ENCODE measurements at regions of chr17 and their contacts with region 1.

Region 1: GRCh38 chr17:38735161-38735997 is 5.2 kb downstream of the CISD3 start:
- DNase-seq: peak; percentile 19 to 82 (median 67)
- ATAC-seq: peak in 2 of 4 experiments; percentile 27 to 41
- H3K4me3 ChIP-seq: no peak overlapping the region
- H3K4me3 Mint-ChIP-seq: no peak overlapping the region
- H3K27ac ChIP-seq: no peak overlapping the region
- H3K27ac Mint-ChIP-seq: no peak overlapping the region
- H3K4me1 ChIP-seq: peaks cover 0 to 49% of the 10 kb centered on the region in 2 experiments
- H3K4me1 Mint-ChIP-seq: peaks cover 36 to 49% (median 45%) of the 10 kb centered on the region in 3 donors
- H3K27me3 ChIP-seq: peaks cover 0 to 19% of the 10 kb centered on the region in 2 experiments
- H3K27me3 Mint-ChIP-seq: peaks cover 0 to 3% of the 10 kb centered on the region in 2 donors

Region 2: DNA sequence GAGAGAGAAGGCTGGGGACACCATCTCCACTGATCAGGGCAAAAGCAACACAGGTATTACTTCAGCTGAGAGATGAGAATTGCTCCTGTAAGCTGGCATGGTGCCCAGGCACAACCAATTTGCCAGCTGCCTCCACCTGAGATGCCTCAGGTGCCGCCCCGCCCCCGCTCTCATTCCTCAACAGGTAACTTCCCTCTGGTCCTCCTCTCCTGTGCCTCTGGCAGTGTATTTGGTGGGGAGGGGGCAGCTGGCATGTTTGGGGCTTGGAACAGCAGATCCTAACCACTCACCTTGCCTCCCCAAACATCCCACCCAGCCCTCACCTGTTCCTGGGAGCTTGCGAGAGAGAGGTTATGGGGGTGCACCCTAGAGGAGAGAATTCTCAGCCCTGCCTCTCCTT is 126.7 kb before region 1 on chr17:
- CTCF ChIA-PET with region 1: no interaction called
- POLR2A ChIA-PET with region 1: no interaction called
- DNase-seq: no peak
- ATAC-seq: no peak
- H3K4me3 ChIP-seq: no peak overlapping the region
- H3K4me3 Mint-ChIP-seq: no peak overlapping the region
- H3K27ac ChIP-seq: no peak overlapping the region
- H3K27ac Mint-ChIP-seq: peak overlapping the region in 1 of 2 donors; percentile 63
- H3K4me1 ChIP-seq: peaks cover 3 to 25% of the 10 kb centered on the region in 2 experiments
- H3K4me1 Mint-ChIP-seq: peaks cover 11 to 15% (median 14%) of the 10 kb centered on the region in 3 donors
- H3K27me3 ChIP-seq: peaks cover 9 to 85% of the 10 kb centered on the region in 2 experiments
- H3K27me3 Mint-ChIP-seq: peaks cover 49 to 76% of the 10 kb centered on the region in 2 donors

Region 3: DNA sequence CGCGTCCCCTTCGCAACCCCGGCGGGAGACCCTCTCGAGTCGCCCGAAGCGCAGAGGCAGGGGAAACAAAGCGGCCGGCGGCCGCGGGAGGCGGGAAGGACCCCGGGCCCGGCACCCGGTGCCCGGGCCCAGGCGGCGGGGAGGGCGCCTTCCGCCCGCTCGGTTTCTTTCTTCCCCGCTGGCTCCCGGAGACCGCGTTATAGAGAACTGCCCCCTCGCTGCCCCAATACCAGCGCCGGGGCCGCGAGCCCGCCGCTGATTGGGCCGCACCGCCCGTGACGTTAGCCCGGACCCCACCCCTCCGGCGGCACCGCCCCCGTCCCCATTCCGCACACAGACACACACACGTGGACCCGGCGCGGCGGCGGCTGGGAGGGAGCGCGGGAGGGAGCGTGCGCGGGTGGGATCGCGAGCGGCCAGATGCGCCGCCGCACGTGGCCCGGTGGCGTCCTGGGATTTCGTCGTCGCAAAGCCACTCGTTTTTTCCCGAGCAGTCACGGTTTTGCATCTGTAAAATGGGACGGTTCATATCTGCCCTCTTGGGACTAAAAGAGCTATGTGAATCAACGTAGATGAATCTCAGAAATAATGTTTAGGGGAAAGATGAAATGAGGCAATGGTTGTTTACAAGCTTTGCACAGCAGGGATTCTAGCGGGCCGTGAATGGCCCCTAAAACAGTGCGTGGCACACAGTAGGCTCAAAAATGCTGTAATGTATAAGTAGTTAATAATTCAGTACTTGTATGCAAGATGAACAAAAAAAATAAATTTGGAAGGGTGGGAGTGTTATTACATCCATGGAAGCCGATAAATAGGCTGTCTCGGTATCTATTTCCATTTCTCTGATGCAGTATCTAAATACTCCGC is 60.4 kb before region 1 on chr17 and contains the start of gene EPOP:
- CTCF ChIA-PET with region 1: interaction called, 10 to 23 read pairs
- POLR2A ChIA-PET with region 1: no interaction called
- DNase-seq: peak; percentile 46 to 90 (median 66)
- ATAC-seq: peak; percentile 85 to 92 (median 88)
- H3K4me3 ChIP-seq: peak within 1 kb of the TSS; percentile 37 to 70
- H3K4me3 Mint-ChIP-seq: peak within 1 kb of the TSS; percentile 60 to 64 (median 63)
- H3K27ac ChIP-seq: no peak within 1 kb of the TSS
- H3K27ac Mint-ChIP-seq: peak within 1 kb of the TSS in 1 of 2 donors; percentile 2
- H3K4me1 ChIP-seq: peaks cover 3 to 35% of the 10 kb centered on the region in 2 experiments
- H3K4me1 Mint-ChIP-seq: peaks cover 10 to 25% (median 18%) of the 10 kb centered on the region in 3 donors
- H3K27me3 ChIP-seq: peaks cover under 1 to 52% of the 10 kb centered on the region in 2 experiments
- H3K27me3 Mint-ChIP-seq: peaks cover 15 to 29% of the 10 kb centered on the region in 2 donors
- total RNA-seq, gene EPOP: 0.68 to 1.6 (median 0.90) TPM

Region 4: GRCh38 chr17:38705803-38706504 is 29.4 kb before region 1 on chr17:
- CTCF ChIA-PET with region 1: interaction called in 1 of 2 experiments, 13 read pairs
- POLR2A ChIA-PET with region 1: interaction called in 1 of 2 experiments, 4 read pairs
- DNase-seq: peak in 5 of 35 experiments; percentile 20 to 46 (median 28)
- ATAC-seq: no peak
- H3K4me3 ChIP-seq: peak overlapping the region; percentile 85 to 89
- H3K4me3 Mint-ChIP-seq: peak overlapping the region; percentile 91 to 96 (median 96)
- H3K27ac ChIP-seq: peak overlapping the region; percentile 66
- H3K27ac Mint-ChIP-seq: peak overlapping the region; percentile 93 to 95
- H3K4me1 ChIP-seq: peaks cover 15 to 80% of the 10 kb centered on the region in 2 experiments
- H3K4me1 Mint-ChIP-seq: peaks cover 63 to 76% (median 64%) of the 10 kb centered on the region in 3 donors
- H3K27me3 ChIP-seq: no peaks in the 10 kb centered on the region
- H3K27me3 Mint-ChIP-seq: no peaks in the 10 kb centered on the region

Region 5: DNA sequence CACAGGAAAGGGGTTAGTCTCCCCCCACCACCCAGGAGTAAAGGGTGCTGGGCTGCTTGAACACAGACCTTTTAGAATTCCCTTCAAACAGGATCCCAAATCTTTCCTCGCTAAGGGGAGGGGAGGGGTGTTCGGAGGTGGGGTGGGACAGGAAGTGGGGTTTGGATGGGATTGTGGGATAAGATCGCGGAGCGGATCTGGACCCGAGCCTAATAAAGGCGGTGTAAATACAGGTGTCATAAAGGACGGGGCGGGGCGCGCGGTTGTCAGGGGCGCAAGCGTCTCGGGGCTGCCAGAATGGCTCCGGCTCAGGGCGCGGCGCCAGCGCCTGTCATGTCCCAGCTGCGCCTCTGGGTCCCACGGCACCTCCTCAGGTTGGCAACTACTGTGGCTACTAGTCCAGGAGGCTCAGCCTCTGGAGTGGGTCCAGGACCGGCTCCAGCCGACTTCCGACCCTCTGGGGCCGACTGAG is 291.6 kb after region 1 on chr17:
- CTCF ChIA-PET with region 1: no interaction called
- POLR2A ChIA-PET with region 1: no interaction called
- DNase-seq: peak in 21 of 35 experiments; percentile 6 to 40 (median 22)
- ATAC-seq: peak; percentile 31 to 83 (median 61)
- H3K4me3 ChIP-seq: peak overlapping the region in 1 of 2 donors; percentile 7
- H3K4me3 Mint-ChIP-seq: peak overlapping the region in 1 of 3 donors; percentile 52
- H3K27ac ChIP-seq: no peak overlapping the region
- H3K27ac Mint-ChIP-seq: no peak overlapping the region
- H3K4me1 ChIP-seq: peaks cover 0 to 10% of the 10 kb centered on the region in 2 experiments
- H3K4me1 Mint-ChIP-seq: peaks cover 4 to 11% (median 5%) of the 10 kb centered on the region in 3 donors
- H3K27me3 ChIP-seq: peaks cover 2 to 44% of the 10 kb centered on the region in 2 experiments
- H3K27me3 Mint-ChIP-seq: peaks cover 5 to 22% of the 10 kb centered on the region in 2 donors